ENCODE measurements at regions of chr20 and their contacts with region 1.

Region 1: GRCh38 chr20:7770578-7770977 is 169.7 kb downstream of the HAO1 start:
- DNase-seq: peak; percentile 28
- H3K4me3 Mint-ChIP-seq: no peak overlapping the region
- H3K27ac Mint-ChIP-seq: no peak overlapping the region
- H3K4me1 Mint-ChIP-seq: peaks cover 27% of the 10 kb centered on the region
- H3K27me3 Mint-ChIP-seq: no peaks in the 10 kb centered on the region

Region 2: GRCh38 chr20:7693761-7694160 is 76.8 kb before region 1 on chr20:
- intact Hi-C with region 1: loop called (anchors 2 kb)
- DNase-seq: no peak
- H3K4me3 Mint-ChIP-seq: no peak overlapping the region
- H3K27ac Mint-ChIP-seq: no peak overlapping the region
- H3K4me1 Mint-ChIP-seq: peaks cover 3% of the 10 kb centered on the region
- H3K27me3 Mint-ChIP-seq: no peaks in the 10 kb centered on the region

Region 3: DNA sequence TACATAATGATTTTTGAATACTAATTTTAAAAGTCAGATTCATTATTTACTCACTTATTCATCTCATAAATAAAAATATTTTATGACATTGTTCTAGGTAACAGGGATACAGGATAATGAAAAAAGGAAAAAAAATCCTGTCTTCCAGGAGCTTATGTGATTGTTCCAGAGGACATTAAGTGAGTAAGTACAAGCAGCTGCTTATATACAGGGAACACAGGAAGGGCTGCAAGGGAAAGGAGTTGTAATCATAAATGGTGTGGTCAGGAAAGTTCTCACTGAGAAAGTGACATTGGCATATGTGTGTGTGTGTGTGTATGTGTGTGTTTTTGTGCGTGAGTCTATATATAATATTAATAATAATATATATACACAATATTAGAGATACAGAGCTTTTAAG is 47.9 kb after region 1 on chr20:
- intact Hi-C with region 1: no loop called
- DNase-seq: no peak
- H3K4me3 Mint-ChIP-seq: no peak overlapping the region
- H3K27ac Mint-ChIP-seq: no peak overlapping the region
- H3K4me1 Mint-ChIP-seq: no peaks in the 10 kb centered on the region
- H3K27me3 Mint-ChIP-seq: no peaks in the 10 kb centered on the region

Region 4: GRCh38 chr20:7850775-7851490 is 80.4 kb after region 1 on chr20:
- intact Hi-C with region 1: loop called (anchors 5 kb)
- DNase-seq: no peak
- H3K4me3 Mint-ChIP-seq: no peak overlapping the region
- H3K27ac Mint-ChIP-seq: no peak overlapping the region
- H3K4me1 Mint-ChIP-seq: no peaks in the 10 kb centered on the region
- H3K27me3 Mint-ChIP-seq: peaks cover 2% of the 10 kb centered on the region